GM12878 (cell line): ENCODE measurements at regions of chr19 and their contacts with region 1.

Region 1: DNA sequence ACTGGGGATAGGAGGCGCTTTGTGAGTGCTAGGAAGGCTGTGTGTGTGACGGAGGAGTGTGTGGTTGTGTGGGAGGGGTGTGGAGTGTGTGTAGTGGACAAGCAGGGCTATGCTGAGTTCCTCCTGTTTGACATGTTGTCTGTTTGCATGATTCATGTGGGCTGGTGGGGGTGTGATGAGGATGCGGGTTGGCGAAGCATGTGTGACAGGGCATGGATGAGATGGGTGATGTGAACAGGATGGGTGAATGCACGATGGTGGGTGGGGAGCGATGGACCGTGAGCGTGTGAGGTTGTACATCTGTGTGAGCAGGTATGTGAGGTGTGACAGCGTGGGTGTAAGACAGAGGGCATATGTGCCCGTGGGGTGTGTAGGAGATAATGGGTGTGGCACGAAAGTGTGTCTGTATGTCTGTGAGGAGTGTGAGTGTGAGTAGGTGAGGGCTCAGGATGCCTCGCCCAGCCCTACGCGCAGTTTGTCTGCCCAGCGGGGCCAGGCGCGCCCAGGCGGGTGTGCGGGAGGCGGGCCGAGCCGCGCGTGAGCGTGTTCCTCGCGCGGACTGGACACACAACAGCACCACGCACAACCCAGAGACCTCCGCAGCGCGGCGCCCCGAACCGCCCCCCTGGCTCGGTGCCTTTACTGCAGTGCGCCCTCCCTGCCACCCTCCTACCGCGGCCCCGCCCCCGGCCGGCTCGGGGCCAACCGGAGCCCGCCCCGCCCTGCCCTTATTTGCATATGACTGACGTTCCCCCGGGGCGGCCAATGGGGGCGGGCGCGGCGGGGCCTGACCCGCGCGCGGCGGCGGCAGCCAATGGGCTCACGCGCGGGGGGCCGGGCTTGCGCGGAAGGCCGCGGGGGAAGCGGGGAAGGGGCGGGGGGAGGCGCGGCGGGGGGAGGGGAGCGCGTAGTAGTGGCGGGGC is 14.4 kb downstream of the CIC start:
- DNase-seq: peak; percentile 69
- ATAC-seq: peak; percentile 66
- H3K4me3 ChIP-seq: peak overlapping the region; percentile 61
- H3K27ac ChIP-seq: peak overlapping the region; percentile 78
- H3K4me1 ChIP-seq: peaks cover 50% of the 10 kb centered on the region
- H3K27me3 ChIP-seq: no peaks in the 10 kb centered on the region
- CTCF ChIP-seq: peak in 1 of 3 experiments; percentile 22; a peak in 1 of 6 replicates
- EP300 ChIP-seq: no peak
- POLR2A ChIP-seq: peak; percentile 68
- RAD21 ChIP-seq: no peak

Region 2: DNA sequence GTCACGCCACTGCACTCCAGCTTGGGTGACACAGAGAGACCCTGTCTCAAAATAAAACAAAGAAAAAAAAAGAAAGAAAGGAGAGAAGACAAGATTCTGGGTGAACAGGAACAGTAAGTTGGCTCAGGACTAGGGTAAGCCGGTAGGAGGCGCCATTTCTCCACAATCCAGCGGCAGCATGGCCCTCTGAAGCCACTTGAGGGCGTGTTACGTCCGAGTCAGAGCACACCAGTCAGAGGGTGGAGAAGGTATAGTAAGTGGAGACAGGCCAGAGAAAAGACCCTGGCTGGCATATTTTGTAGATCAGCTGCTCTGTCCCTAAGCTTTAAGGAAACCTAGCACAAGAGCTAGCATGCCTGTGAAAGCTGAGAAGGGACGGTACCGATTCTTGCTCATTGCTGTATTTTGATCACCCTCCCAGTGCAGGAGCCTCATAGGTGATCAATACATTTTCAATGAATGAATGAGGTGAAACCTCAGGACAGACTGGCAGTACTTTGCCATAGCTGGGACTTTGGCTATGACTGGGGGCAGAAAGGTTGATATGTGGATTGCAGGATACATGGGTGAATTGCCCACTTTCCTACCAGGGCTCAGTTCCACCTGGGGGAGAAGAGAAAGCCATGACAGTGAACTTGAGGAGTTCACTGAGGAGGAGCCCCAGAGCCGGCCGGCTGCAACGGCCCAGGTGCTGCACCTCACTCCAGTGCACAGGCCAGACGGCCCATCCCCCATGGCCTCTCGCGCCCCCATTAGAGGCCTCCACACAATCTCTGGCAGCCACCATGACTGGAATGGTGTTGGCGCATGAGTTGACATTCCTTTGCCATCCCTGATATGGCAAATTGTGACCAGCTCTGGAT is 174.6 kb before region 1 on chr19:
- CTCF ChIA-PET with region 1: interaction called, 18 read pairs
- POLR2A ChIA-PET with region 1: interaction called, 3 read pairs
- RAD21 ChIA-PET with region 1: interaction called, 8 read pairs
- SMC1A ChIA-PET with region 1: interaction called, 9 read pairs
- in situ Hi-C with region 1: no loop called
- intact Hi-C with region 1: loop called (anchors 5 kb)
- DNase-seq: peak; percentile 72
- ATAC-seq: peak; percentile 99
- H3K4me3 ChIP-seq: no peak overlapping the region
- H3K27ac ChIP-seq: no peak overlapping the region
- H3K4me1 ChIP-seq: peaks cover 31% of the 10 kb centered on the region
- H3K27me3 ChIP-seq: no peaks in the 10 kb centered on the region
- CTCF ChIP-seq: peak; percentile 100; a peak in 5 of 6 replicates
- EP300 ChIP-seq: no peak; a peak in 1 of 4 replicates
- POLR2A ChIP-seq: no peak
- RAD21 ChIP-seq: peak; percentile 100

Region 3: GRCh38 chr19:42132851-42133528 is 150.4 kb before region 1 on chr19:
- CTCF ChIA-PET with region 1: interaction called, 17 read pairs
- POLR2A ChIA-PET with region 1: interaction called, 4 read pairs
- RAD21 ChIA-PET with region 1: interaction called, 9 read pairs
- SMC1A ChIA-PET with region 1: interaction called, 10 read pairs
- in situ Hi-C with region 1: loop called (anchors 5 kb)
- intact Hi-C with region 1: loop called (anchors 5 kb)
- DNase-seq: peak; percentile 33
- ATAC-seq: peak; percentile 55
- H3K4me3 ChIP-seq: peak overlapping the region; percentile 99
- H3K27ac ChIP-seq: peak overlapping the region; percentile 99
- H3K4me1 ChIP-seq: peaks cover 27% of the 10 kb centered on the region
- H3K27me3 ChIP-seq: no peaks in the 10 kb centered on the region
- CTCF ChIP-seq: peak; percentile 76 to 99 (median 92); a peak in 5 of 6 replicates
- EP300 ChIP-seq: no peak
- POLR2A ChIP-seq: peak; percentile 61
- RAD21 ChIP-seq: peak; percentile 90

Region 4: GRCh38 chr19:42199440-42200115 is 83.8 kb before region 1 on chr19:
- CTCF ChIA-PET with region 1: interaction called, 9 read pairs
- POLR2A ChIA-PET with region 1: interaction called, 3 read pairs
- RAD21 ChIA-PET with region 1: no interaction called
- SMC1A ChIA-PET with region 1: interaction called, 5 read pairs
- in situ Hi-C with region 1: no loop called
- intact Hi-C with region 1: loop called (anchors 5 kb)
- DNase-seq: peak; percentile 68
- ATAC-seq: peak; percentile 77
- H3K4me3 ChIP-seq: peak overlapping the region; percentile 41
- H3K27ac ChIP-seq: peak overlapping the region; percentile 95
- H3K4me1 ChIP-seq: peaks cover 59% of the 10 kb centered on the region
- H3K27me3 ChIP-seq: no peaks in the 10 kb centered on the region
- CTCF ChIP-seq: peak; percentile 55 to 67 (median 61)
- EP300 ChIP-seq: no peak
- POLR2A ChIP-seq: peak; percentile 74
- RAD21 ChIP-seq: peak; percentile 40

Region 5: DNA sequence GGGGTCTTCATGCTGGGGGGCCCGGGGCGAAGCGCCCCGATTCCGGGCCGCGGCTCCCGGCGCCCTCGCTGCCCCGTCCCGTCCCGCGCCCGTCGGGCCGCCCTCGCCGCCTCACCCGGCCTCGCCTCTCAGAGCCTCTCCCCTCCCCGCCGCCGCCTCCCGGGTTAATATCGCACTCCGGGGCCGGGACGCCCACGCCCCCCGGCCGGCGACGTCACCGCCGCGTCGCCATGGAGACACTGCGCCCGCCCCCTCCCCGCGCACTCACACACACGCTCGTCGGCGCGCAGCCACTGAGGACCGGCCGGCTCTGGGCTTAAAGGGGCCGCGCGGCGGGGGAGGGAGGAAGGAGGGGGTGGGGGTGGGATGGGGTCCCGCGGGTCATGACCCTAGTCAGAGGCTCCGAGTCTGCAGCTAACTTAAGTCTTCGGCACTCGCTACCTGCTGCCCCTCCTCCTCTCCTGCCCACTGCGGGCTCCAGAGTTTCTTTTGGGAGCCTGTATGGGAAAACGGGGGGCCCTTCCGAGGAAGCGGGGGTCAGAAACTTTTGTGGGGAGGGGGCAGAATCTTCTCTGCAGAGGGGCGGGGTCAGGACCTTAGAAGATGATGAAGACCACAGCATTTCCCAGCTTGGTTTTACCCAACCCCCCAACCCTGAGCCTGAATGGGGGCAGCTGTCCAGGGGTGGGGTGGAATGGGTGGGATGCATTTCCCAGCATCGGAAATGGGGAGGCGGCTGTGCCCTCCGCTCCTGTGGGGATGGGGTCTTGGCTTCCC is 28.2 kb before region 1 on chr19 and contains the start of gene ERF:
- CTCF ChIA-PET with region 1: interaction called, 19 read pairs
- POLR2A ChIA-PET with region 1: interaction called, 6 read pairs
- RAD21 ChIA-PET with region 1: interaction called, 6 read pairs
- SMC1A ChIA-PET with region 1: interaction called, 13 read pairs
- in situ Hi-C with region 1: no loop called
- intact Hi-C with region 1: no loop called
- DNase-seq: peak; percentile 45
- ATAC-seq: peak; percentile 79
- H3K4me3 ChIP-seq: peak within 1 kb of the TSS; percentile 99
- H3K27ac ChIP-seq: peak within 1 kb of the TSS; percentile 94
- H3K4me1 ChIP-seq: peaks cover 16% of the 10 kb centered on the region
- H3K27me3 ChIP-seq: no peaks in the 10 kb centered on the region
- CTCF ChIP-seq: no peak
- EP300 ChIP-seq: no peak
- POLR2A ChIP-seq: peak; percentile 89
- RAD21 ChIP-seq: no peak
- polyA plus RNA-seq, gene ERF: 0.02 to 0.04 TPM